Activated CD4-positive, alpha-beta T cell treated with anti-CD3 and anti-CD28 coated beads for 36 hours (primary cell): ENCODE measurements at regions of chr11 and their contacts with region 1.

Region 1: GRCh38 chr11:34438529-34439507 is at the start of gene CAT:
- DNase-seq: peak; percentile 99
- ATAC-seq: peak; percentile 99
- H3K4me3 Mint-ChIP-seq: peak within 1 kb of the TSS; percentile 86
- H3K27ac Mint-ChIP-seq: peak within 1 kb of the TSS; percentile 93
- H3K4me1 Mint-ChIP-seq: peaks cover 22% of the 10 kb centered on the region
- H3K27me3 Mint-ChIP-seq: no peaks in the 10 kb centered on the region
- total RNA-seq, gene CAT: 25.1 to 25.5 TPM

Region 2: DNA sequence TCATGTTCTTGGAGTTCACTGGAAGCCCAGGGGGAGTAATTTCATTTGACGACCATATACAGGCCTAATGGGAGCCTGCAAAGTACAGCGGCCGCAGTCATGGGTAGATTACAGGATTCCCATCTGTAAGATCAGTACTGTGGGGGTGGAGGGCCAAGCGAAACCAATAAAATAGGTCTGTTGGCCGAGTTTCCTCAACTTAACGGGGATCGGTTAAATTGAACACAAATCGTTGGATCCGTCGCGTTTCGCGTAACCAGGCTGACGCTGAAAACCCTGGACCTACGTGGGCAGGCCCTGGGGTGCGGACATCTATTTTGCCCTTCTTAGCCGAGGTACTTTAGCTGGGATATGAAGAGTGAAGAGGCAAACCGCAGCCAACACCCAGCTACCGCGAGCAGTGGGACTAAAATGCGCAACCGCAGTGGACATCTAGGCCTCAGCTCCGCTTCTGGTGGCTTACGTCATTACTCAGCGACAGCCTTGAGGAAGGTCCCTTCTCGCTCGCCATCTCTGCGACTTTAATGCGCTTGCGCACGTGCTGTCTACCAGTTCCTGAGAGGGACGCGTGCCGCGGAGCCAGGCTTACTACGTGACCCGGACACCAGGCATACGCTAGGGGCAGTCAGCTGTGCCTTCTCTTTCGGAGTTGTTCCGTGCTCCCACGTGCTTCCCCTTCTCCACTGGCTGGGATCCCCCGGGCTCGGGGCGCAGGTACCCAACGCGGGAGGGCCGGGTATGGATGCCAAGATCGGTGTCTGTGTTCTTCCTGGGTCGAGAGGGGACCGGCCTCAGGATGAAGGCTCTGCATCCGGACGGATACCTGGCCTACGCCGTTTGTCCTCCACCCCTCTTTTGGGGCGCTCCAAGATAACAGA is 333.5 kb before region 1 on chr11 and contains the start of gene NAT10:
- CTCF ChIA-PET with region 1: no interaction called
- POLR2A ChIA-PET with region 1: interaction called, 3 read pairs
- intact Hi-C with region 1: loop called (anchors 1 kb)
- DNase-seq: peak; percentile 98
- ATAC-seq: peak; percentile 93
- H3K4me3 Mint-ChIP-seq: peak within 1 kb of the TSS; percentile 97
- H3K27ac Mint-ChIP-seq: peak within 1 kb of the TSS; percentile 99
- H3K4me1 Mint-ChIP-seq: peaks cover 57% of the 10 kb centered on the region
- H3K27me3 Mint-ChIP-seq: no peaks in the 10 kb centered on the region
- total RNA-seq, gene NAT10: 142 to 147 TPM

Region 3: GRCh38 chr11:34250732-34251639 is 187.8 kb before region 1 on chr11:
- CTCF ChIA-PET with region 1: no interaction called
- POLR2A ChIA-PET with region 1: no interaction called
- intact Hi-C with region 1: loop called in 1 of 2 experiments (anchors 2 kb)
- DNase-seq: peak; percentile 86
- ATAC-seq: peak; percentile 98
- H3K4me3 Mint-ChIP-seq: no peak overlapping the region
- H3K27ac Mint-ChIP-seq: no peak overlapping the region
- H3K4me1 Mint-ChIP-seq: peaks cover 60% of the 10 kb centered on the region
- H3K27me3 Mint-ChIP-seq: peaks cover 20% of the 10 kb centered on the region

Region 4: GRCh38 chr11:34405079-34405858 is 33.5 kb before region 1 on chr11:
- CTCF ChIA-PET with region 1: no interaction called
- POLR2A ChIA-PET with region 1: no interaction called
- intact Hi-C with region 1: loop called in 1 of 2 experiments (anchors 2 kb)
- DNase-seq: peak; percentile 7
- ATAC-seq: peak; percentile 88
- H3K4me3 Mint-ChIP-seq: no peak overlapping the region
- H3K27ac Mint-ChIP-seq: peak overlapping the region; percentile 33
- H3K4me1 Mint-ChIP-seq: peaks cover 17% of the 10 kb centered on the region
- H3K27me3 Mint-ChIP-seq: peaks cover 17% of the 10 kb centered on the region

Region 5: GRCh38 chr11:35662649-35663407 is 1224.0 kb after region 1 on chr11 and contains the start of gene TRIM44:
- CTCF ChIA-PET with region 1: no interaction called
- POLR2A ChIA-PET with region 1: no interaction called
- intact Hi-C with region 1: loop called in 1 of 2 experiments (anchors 10 kb)
- DNase-seq: peak; percentile 92
- ATAC-seq: peak; percentile 86
- H3K4me3 Mint-ChIP-seq: peak within 1 kb of the TSS; percentile 83
- H3K27ac Mint-ChIP-seq: peak within 1 kb of the TSS; percentile 97
- H3K4me1 Mint-ChIP-seq: peaks cover 41% of the 10 kb centered on the region
- H3K27me3 Mint-ChIP-seq: peaks cover under 1% of the 10 kb centered on the region
- total RNA-seq, gene TRIM44: 38.1 to 39.9 TPM